Gastrocnemius medialis (tissue), 4 donors: ENCODE measurements at regions of chr4 and their contacts with region 1.

Region 1: DNA sequence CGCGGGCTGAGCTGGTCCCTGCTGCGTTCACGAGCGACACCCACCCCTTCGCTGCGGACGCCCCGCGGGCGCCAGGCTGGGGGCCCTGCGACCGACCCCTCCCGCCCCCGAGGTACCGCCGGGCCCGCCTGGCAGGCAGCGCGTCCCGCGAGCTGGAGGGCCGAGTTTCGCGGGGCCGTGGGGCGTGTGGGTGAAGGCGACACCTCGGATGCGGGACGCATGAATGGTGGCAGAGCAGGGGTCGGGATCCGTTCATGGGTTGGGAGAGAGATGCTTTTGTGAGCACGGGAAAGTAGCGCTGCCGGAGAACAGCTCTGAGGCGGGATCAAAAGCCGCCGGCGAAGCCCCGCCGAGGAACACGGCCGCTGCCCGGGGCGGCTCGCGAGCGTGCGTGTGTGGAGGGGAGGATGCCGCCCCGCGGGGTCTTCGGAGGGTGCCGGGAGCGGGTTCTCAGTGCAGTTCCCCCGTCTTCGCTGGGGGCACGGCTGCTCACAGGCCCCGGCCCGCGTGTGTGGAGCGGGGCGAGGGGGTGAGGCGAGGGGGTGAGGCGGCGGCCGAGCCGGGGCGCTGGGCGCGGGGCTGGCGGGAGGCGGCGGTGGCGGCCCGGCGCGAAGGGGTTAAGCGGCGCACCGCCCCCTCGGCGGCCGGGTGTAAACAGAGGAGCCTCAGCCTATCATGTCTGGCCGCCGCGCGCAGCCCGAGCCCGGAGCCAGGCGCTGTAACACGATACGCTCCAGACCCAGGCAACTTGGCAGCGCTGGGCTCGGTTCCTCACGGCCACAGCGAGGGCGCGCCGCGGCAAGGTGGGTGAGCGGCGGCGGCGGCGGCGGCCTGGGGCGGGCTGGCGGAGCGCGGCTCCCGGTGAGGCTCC is 205.3 kb downstream of the TENM3 start:
- DNase-seq: peak; percentile 89 to 95
- ATAC-seq: peak; percentile 92 to 93
- H3K4me3 ChIP-seq: peak overlapping the region; percentile 75 to 83 (median 79)
- H3K27ac ChIP-seq: peak overlapping the region; percentile 79 to 86 (median 83)
- H3K4me1 ChIP-seq: peaks cover 12 to 24% of the 10 kb centered on the region in 2 donors
- H3K27me3 ChIP-seq: no peaks in the 10 kb centered on the region
- CTCF ChIP-seq: no peak
- POLR2A ChIP-seq: peak; percentile 64 to 69

Region 2: GRCh38 chr4:182207830-182208396 is 240.6 kb before region 1 on chr4:
- in situ Hi-C with region 1: no loop called
- intact Hi-C with region 1: loop called (anchors 10 kb)
- DNase-seq: no peak
- ATAC-seq: peak; percentile 62 to 78
- H3K4me3 ChIP-seq: no peak overlapping the region
- H3K27ac ChIP-seq: peak overlapping the region in 1 of 4 donors; percentile 19
- H3K4me1 ChIP-seq: peaks cover 2 to 10% of the 10 kb centered on the region in 2 donors
- H3K27me3 ChIP-seq: peaks cover 0 to 3% (median 0%) of the 10 kb centered on the region in 3 donors
- CTCF ChIP-seq: no peak
- POLR2A ChIP-seq: no peak

Region 3: DNA sequence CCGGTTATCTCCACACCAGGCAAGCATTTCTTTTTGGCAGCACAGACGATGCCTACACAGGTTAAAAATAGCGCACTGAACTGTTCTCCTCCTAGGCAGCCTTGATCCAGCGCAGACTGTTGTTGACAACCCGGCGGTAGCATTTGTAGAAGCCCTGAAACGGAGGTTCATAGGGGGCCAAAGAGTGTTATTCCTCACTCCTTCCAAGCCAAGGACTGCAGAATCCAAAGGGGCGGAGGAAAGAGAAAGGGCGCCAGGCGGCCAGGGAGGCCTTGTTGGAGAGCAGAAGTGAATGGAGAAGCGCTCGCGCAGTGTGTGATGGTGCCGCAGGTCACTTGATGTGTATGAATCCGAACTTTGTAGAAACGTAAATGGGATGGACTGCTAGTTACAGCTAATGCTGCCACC is 122.7 kb before region 1 on chr4:
- in situ Hi-C with region 1: no loop called
- intact Hi-C with region 1: no loop called
- DNase-seq: no peak
- ATAC-seq: no peak
- H3K4me3 ChIP-seq: no peak overlapping the region
- H3K27ac ChIP-seq: no peak overlapping the region
- H3K4me1 ChIP-seq: no peaks in the 10 kb centered on the region
- H3K27me3 ChIP-seq: no peaks in the 10 kb centered on the region
- CTCF ChIP-seq: no peak
- POLR2A ChIP-seq: no peak

Region 4: GRCh38 chr4:182555997-182556418 is 107.5 kb after region 1 on chr4:
- in situ Hi-C with region 1: loop called in 1 of 4 experiments (anchors 25 kb)
- intact Hi-C with region 1: no loop called
- DNase-seq: no peak
- ATAC-seq: no peak
- H3K4me3 ChIP-seq: no peak overlapping the region
- H3K27ac ChIP-seq: no peak overlapping the region
- H3K4me1 ChIP-seq: peaks cover 0 to 12% of the 10 kb centered on the region in 2 donors
- H3K27me3 ChIP-seq: no peaks in the 10 kb centered on the region
- CTCF ChIP-seq: no peak
- POLR2A ChIP-seq: no peak